ENCODE measurements at regions of chr5 and their contacts with region 1.

Region 1: DNA sequence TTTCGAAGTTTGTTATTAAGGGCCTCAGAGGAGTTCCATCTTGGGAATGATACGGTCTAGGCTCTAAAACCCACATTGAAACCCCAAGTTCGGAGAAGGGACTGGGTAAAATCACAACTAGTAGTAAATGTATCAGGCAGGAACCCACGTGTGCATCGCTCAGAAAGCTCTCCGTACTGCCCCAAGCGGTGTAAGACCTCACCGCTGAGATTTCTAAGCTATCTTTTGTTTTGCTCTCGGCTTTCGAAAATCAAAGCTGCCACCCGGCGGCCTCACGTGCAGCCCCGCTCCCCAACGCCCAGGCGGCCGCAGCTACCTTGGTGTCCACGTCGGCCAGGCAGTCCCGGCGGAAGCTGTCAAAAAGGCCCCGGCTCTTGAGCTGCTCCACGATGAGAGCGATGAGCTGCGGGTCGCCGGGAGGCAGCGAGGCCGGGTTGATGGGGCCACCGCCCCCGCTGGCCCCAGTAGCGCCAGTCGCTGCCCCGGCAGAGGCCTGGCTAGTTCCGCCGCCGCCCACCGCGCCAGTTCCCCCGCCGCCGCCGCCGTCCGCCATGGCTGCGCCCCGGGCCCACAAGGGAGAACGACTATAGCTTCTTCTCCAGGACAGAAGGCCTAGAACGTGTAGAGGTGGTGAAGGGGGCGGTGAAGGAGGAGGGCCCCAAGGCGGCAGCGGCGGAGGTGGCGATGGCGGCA is 420 bp downstream of the BOD1 start:
- DNase-seq: peak; percentile 43
- ATAC-seq: peak; percentile 86
- H3K4me3 ChIP-seq: peak overlapping the region; percentile 66
- H3K27ac ChIP-seq: peak overlapping the region; percentile 72
- H3K4me1 ChIP-seq: peaks cover 14% of the 10 kb centered on the region
- H3K27me3 ChIP-seq: no peaks in the 10 kb centered on the region
- CTCF ChIP-seq: peak; percentile 70 to 82 (median 77)
- EP300 ChIP-seq: no peak
- POLR2A ChIP-seq: peak; percentile 73
- RAD21 ChIP-seq: peak; percentile 29; the same call in 1 of the 2 replicates

Region 2: DNA sequence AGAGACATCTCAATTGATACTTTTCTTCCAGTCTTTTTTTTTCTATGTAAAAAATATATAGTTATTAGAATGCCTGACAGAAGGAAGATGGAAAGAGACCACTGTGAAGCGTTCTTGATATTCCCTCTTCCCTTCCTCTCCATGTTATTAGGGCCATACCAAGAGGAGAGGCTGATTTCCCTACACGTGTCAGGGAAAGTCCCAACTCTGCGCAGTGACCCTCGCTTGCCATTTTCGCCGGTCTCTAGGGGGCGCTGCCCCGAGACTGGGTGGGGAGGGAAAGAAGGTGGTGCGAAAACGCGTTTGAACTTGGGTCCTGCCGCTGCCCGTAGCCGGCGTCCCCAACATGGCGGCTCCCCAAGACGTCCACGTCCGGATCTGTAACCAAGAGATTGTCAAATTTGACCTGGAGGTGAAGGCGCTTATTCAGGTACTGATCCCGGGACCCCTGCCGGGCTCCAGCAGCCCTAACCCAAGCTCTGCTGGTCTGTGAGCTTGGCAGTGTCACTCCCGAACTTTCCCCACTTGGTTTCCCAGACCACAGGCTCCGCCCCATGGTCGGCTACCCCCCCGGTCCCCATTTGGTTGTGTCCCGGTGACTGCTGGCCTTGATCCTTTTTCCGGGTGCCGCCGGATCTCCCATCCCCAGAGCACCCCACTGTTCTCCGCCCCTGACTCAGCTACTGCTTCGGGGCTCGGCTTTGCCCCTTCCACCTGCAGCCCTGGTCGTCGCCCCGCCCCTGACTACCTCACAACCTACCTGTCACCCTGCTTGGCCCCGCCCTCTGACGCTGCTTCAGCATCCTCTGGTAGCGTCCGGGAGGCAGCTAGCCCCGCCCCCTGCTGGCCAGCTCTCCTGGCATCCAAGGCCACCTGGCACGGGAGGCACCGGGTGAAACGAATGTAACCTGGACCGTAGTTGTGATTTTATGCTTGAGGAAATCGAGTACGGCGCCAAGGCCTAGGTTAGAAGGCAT is 471.5 kb before region 1 on chr5 and contains the start of gene BNIP1:
- CTCF ChIA-PET with region 1: no interaction called
- POLR2A ChIA-PET with region 1: no interaction called
- RAD21 ChIA-PET with region 1: no interaction called
- SMC1A ChIA-PET with region 1: no interaction called
- in situ Hi-C with region 1: no loop called
- intact Hi-C with region 1: no loop called
- DNase-seq: peak; percentile 84
- ATAC-seq: peak; percentile 96
- H3K4me3 ChIP-seq: peak within 1 kb of the TSS; percentile 94
- H3K27ac ChIP-seq: peak within 1 kb of the TSS; percentile 91
- H3K4me1 ChIP-seq: no peaks in the 10 kb centered on the region; the same call in 1 of the 2 replicates
- H3K27me3 ChIP-seq: no peaks in the 10 kb centered on the region
- CTCF ChIP-seq: peak; percentile 96 to 98 (median 98)
- EP300 ChIP-seq: no peak
- POLR2A ChIP-seq: peak; percentile 79
- RAD21 ChIP-seq: peak; percentile 60
- polyA plus RNA-seq, gene BNIP1: 56.3 to 62.5 TPM

Region 3: GRCh38 chr5:173602423-173602822 is 13.6 kb before region 1 on chr5:
- CTCF ChIA-PET with region 1: interaction called, 11 read pairs
- POLR2A ChIA-PET with region 1: interaction called, 3 read pairs
- RAD21 ChIA-PET with region 1: interaction called, 3 read pairs
- SMC1A ChIA-PET with region 1: interaction called, 4 read pairs
- in situ Hi-C with region 1: no loop called
- intact Hi-C with region 1: no loop called
- DNase-seq: no peak
- ATAC-seq: no peak
- H3K4me3 ChIP-seq: no peak overlapping the region
- H3K27ac ChIP-seq: no peak overlapping the region
- H3K4me1 ChIP-seq: no peaks in the 10 kb centered on the region
- H3K27me3 ChIP-seq: no peaks in the 10 kb centered on the region
- CTCF ChIP-seq: no peak
- EP300 ChIP-seq: no peak
- POLR2A ChIP-seq: no peak
- RAD21 ChIP-seq: no peak

Region 4: GRCh38 chr5:173887610-173888472 is 271.8 kb after region 1 on chr5 and contains the start of gene CPEB4:
- CTCF ChIA-PET with region 1: interaction called, 11 read pairs
- POLR2A ChIA-PET with region 1: interaction called, 4 read pairs
- RAD21 ChIA-PET with region 1: interaction called, 20 read pairs
- SMC1A ChIA-PET with region 1: interaction called, 16 read pairs
- in situ Hi-C with region 1: no loop called
- intact Hi-C with region 1: loop called (anchors 2 kb)
- DNase-seq: peak; percentile 99
- ATAC-seq: peak; percentile 90
- H3K4me3 ChIP-seq: peak within 1 kb of the TSS; percentile 94
- H3K27ac ChIP-seq: peak within 1 kb of the TSS; percentile 100
- H3K4me1 ChIP-seq: peaks cover 30% of the 10 kb centered on the region
- H3K27me3 ChIP-seq: no peaks in the 10 kb centered on the region
- CTCF ChIP-seq: no peak
- EP300 ChIP-seq: peak in 1 of 2 experiments; percentile 41; a peak in 1 of 4 replicates
- POLR2A ChIP-seq: peak; percentile 92
- RAD21 ChIP-seq: 0 out of 2 replicates have a peak, but pooled peaks have one; percentile 10
- polyA plus RNA-seq, gene CPEB4: 6.9 to 20.3 TPM

Region 5: DNA sequence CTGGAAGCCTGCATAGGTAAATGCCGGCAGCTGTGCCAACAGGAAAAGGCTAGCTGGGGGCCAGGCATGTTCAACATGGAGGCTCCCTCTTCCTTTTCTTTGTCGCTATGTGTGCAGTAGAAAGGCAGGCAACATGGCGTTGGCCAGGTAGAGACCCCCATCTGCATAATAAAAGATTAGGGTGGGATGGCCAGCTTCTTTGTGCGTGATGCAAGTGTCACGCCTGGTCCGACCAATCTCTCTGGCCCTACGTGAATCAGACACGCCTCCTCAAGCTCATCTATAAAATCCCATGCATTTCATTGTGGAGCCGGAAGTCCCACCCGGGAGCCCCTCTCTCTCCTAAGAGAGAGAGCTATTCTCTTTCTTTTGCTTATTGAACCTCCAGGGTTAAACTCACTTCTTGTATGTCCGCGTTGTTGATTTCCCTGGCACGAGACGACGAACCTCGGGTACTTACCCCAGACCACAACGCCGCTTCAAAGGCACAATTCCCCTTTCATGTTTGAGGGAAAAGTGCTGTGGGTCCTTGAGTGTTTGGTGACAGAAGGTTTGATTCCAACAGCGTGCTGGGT is 347.9 kb after region 1 on chr5:
- CTCF ChIA-PET with region 1: interaction called, 11 read pairs
- POLR2A ChIA-PET with region 1: no interaction called
- RAD21 ChIA-PET with region 1: interaction called, 15 read pairs
- SMC1A ChIA-PET with region 1: interaction called, 171 read pairs
- in situ Hi-C with region 1: loop called (anchors 5 kb)
- intact Hi-C with region 1: no loop called
- DNase-seq: no peak
- ATAC-seq: no peak
- H3K4me3 ChIP-seq: no peak overlapping the region
- H3K27ac ChIP-seq: no peak overlapping the region
- H3K4me1 ChIP-seq: no peaks in the 10 kb centered on the region
- H3K27me3 ChIP-seq: no peaks in the 10 kb centered on the region
- CTCF ChIP-seq: no peak
- EP300 ChIP-seq: no peak
- POLR2A ChIP-seq: no peak
- RAD21 ChIP-seq: no peak

Region 6: DNA sequence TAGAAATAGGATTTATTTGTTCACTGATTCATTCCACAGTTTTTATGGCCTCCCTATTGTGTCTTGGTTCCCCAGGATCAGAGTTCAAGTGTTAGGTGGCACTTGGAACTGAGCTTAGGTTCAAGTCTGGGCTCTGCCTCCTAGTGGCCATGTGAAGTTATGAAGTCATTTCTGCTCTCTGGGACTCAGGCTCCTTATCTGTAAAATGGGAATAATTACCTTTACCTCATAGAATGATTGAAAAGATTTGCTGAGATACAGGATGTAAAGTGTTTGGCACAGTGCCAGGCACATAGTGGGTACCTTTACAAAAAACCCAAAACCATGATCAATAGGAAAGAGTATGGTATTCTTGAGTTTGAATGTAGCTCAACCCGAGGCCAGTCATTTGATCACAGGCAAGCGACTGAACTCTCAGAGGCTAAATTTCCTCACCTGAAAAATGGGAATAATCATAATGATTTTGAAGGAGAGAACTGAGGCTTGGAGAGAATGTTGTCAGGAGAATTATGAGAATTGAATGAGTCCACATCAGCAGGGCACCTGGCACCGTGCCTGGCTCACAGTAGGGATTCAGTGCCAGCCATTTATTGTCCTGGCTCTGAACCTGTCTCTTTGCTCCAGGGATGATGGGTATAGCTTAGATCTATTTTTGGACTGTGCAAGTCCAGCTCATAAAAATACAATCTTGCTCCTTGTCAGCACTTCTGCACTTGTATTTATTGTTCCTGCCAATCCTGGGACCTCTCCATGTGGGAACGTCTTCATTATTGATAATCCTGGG is 440.2 kb after region 1 on chr5:
- CTCF ChIA-PET with region 1: interaction called, 17 read pairs
- POLR2A ChIA-PET with region 1: no interaction called
- RAD21 ChIA-PET with region 1: no interaction called
- SMC1A ChIA-PET with region 1: no interaction called
- in situ Hi-C with region 1: no loop called
- intact Hi-C with region 1: no loop called
- DNase-seq: no peak
- ATAC-seq: peak; percentile 56
- H3K4me3 ChIP-seq: no peak overlapping the region
- H3K27ac ChIP-seq: no peak overlapping the region
- H3K4me1 ChIP-seq: no peaks in the 10 kb centered on the region
- H3K27me3 ChIP-seq: no peaks in the 10 kb centered on the region; a peak in 1 of 4 replicates
- CTCF ChIP-seq: peak; percentile 10 to 40 (median 38); a peak in 5 of 6 replicates
- EP300 ChIP-seq: no peak
- POLR2A ChIP-seq: no peak
- RAD21 ChIP-seq: no peak

Region 7: DNA sequence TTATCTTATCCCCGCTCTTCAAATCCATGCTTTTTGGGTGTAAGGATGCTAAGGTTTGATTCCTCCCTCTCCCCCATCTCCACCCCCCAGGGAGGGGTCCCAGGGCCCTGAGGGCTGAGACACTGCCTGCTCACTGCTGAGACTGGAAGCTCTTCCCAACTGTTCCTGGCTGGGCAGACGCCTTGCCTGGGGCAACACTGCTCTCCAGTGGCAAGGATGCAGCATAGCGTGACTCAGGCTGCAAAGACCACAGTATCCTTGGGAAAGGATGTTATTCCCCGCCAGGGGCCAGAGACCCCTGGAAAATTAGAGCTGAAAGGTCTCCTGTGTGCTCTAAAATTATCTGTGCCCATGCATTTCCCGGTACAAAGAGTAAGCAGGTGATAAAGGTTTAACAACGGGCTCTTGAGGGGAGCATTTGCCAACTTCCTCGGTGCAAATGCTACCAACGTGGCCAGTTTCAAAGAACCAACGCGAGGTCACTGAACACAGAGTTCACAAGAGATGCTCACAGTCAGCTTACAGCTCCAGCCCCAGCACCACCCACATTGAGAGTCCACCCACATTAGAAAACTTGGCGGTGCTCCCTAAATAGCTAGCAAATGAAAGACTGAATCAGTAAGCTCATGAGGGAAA is 701.3 kb after region 1 on chr5:
- CTCF ChIA-PET with region 1: interaction called, 7 read pairs
- POLR2A ChIA-PET with region 1: no interaction called
- RAD21 ChIA-PET with region 1: no interaction called
- SMC1A ChIA-PET with region 1: interaction called, 6 read pairs
- in situ Hi-C with region 1: loop called (anchors 5 kb)
- intact Hi-C with region 1: loop called (anchors 2 kb)
- DNase-seq: no peak
- ATAC-seq: peak; percentile 51; the same call in 1 of the 3 replicates
- H3K4me3 ChIP-seq: no peak overlapping the region
- H3K27ac ChIP-seq: no peak overlapping the region
- H3K4me1 ChIP-seq: no peaks in the 10 kb centered on the region
- H3K27me3 ChIP-seq: peaks cover 0 to 2% of the 10 kb centered on the region in 2 experiments; a peak in 2 of 4 replicates
- CTCF ChIP-seq: peak; percentile 77 to 82 (median 80)
- EP300 ChIP-seq: no peak
- POLR2A ChIP-seq: no peak
- RAD21 ChIP-seq: peak; percentile 83